ENCODE measurements at regions of chr7 and their contacts with region 1.

Region 1: DNA sequence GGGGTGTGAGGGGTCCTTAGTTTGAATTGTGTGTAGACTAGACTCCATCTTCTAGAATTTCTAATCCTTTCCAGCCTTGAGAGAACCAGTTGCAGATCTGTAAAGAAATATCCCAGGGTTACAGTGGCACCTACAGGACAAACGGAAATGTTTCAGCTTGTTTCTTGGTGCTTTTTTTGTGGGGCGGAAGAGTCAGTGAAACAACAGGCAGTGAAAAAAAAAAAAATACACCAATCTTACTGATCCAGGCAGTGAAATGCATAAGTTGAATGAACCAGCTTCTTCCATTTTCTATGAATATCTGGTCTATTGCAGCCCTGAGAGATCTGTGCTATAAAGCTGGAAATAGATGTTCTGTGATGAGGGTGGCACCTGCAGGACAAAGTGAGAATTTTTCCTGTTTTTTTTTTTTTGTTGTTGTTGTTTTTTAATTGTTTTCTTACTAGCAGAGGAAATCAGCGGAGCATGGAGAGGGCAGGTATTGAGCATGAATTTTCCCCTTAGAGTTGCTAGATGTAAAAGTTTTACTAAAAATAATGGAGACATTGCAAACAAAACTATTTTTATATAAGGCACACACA is 81.9 kb upstream of the DYNC1I1 start:
- DNase-seq: no peak
- H3K4me3 ChIP-seq: no peak overlapping the region
- H3K27me3 ChIP-seq: peaks cover 2% of the 10 kb centered on the region; the same call in 1 of the 2 replicates
- CTCF ChIP-seq: peak; percentile 58

Region 2: GRCh38 chr7:95517458-95517857 is 173.0 kb before region 1 on chr7:
- CTCF ChIA-PET with region 1: interaction called, 274 read pairs
- POLR2A ChIA-PET with region 1: no interaction called
- DNase-seq: no peak
- H3K4me3 ChIP-seq: no peak overlapping the region
- H3K27me3 ChIP-seq: peaks cover 2% of the 10 kb centered on the region; the same call in 1 of the 2 replicates
- CTCF ChIP-seq: no peak

Region 3: GRCh38 chr7:95700917-95701316 is 10.5 kb after region 1 on chr7:
- CTCF ChIA-PET with region 1: interaction called, 10 read pairs
- POLR2A ChIA-PET with region 1: no interaction called
- DNase-seq: no peak
- H3K4me3 ChIP-seq: no peak overlapping the region
- H3K27me3 ChIP-seq: no peaks in the 10 kb centered on the region
- CTCF ChIP-seq: no peak